ENCODE measurements at regions of chr2 and their contacts with region 1.

Region 1: GRCh38 chr2:231052494-231053451 is 3.9 kb upstream of the PSMD1 start:
- DNase-seq: peak; percentile 68
- H3K4me3 ChIP-seq: peak overlapping the region; percentile 39 to 43
- H3K27ac ChIP-seq: peak overlapping the region in 1 of 2 donors; percentile 27
- H3K4me1 ChIP-seq: peaks cover 4% of the 10 kb centered on the region
- H3K27me3 ChIP-seq: no peaks in the 10 kb centered on the region
- CTCF ChIP-seq: peak; percentile 50 to 87 (median 79)
- POLR2A ChIP-seq: no peak

Region 2: DNA sequence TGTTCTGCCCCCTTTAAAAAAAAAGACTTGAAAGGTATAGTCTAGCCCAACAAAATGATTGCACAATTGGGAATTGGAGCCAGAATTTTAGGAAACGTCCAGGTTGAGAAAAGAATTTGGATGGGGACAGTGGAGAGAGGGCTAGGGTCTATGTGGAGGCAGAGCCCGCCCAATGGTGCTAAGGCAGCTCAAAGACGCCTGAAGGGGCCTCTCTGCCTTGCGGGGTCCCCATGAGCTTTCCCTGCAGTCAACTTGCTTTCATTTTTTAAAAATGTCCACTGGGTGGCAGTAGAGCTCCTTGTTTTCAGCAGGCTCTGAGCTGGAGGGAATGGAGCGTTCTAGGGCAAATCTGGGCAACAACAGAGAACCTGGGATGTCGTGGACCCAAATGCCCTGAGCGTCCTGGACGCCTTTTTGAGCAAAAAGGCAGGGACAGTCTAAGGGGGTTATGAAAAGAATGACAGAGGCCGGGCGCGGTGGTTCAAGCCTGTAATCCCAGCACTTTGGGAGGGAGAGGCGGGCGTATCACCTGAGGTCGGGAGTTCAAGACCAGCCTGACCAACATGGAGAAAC is 228.3 kb before region 1 on chr2:
- intact Hi-C with region 1: loop called (anchors 2 kb)
- DNase-seq: peak; percentile 69
- H3K4me3 ChIP-seq: peak overlapping the region in 1 of 2 donors; percentile 14
- H3K27ac ChIP-seq: no peak overlapping the region
- H3K4me1 ChIP-seq: peaks cover 4% of the 10 kb centered on the region
- H3K27me3 ChIP-seq: no peaks in the 10 kb centered on the region
- CTCF ChIP-seq: peak in 3 of 4 experiments; percentile 68 to 78 (median 68)
- POLR2A ChIP-seq: no peak

Region 3: DNA sequence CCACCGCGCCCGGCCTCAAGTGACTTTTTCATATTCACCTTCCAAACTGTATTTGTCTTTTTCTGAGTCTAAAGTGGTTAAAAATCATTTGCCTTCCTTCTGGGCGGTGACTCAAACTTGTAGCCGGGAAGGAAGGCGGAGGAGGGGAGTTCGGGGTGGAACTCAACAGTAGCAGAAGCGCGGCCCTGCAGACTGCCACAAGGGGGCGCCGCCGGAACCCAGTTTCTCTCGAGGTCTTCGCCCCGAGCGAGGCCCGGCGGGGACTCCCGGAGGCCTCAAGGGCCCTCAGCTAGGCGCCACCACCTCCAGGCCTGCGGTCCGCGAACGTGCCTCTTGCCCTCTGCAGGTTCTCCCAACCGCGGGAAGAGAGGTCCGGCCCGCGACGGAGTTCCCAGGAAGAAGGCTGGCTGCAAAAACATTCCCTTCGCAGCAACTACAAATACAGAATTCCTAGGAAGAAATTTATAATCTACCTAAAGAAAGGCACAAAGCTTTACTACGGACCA is 204.8 kb before region 1 on chr2:
- intact Hi-C with region 1: no loop called
- DNase-seq: peak; percentile 71
- H3K4me3 ChIP-seq: no peak overlapping the region
- H3K27ac ChIP-seq: no peak overlapping the region
- H3K4me1 ChIP-seq: no peaks in the 10 kb centered on the region
- H3K27me3 ChIP-seq: no peaks in the 10 kb centered on the region
- CTCF ChIP-seq: peak; percentile 39 to 78 (median 72)
- POLR2A ChIP-seq: no peak

Region 4: GRCh38 chr2:231094736-231095346 is 42.1 kb after region 1 on chr2:
- intact Hi-C with region 1: no loop called
- DNase-seq: no peak
- H3K4me3 ChIP-seq: no peak overlapping the region
- H3K27ac ChIP-seq: no peak overlapping the region
- H3K4me1 ChIP-seq: no peaks in the 10 kb centered on the region
- H3K27me3 ChIP-seq: no peaks in the 10 kb centered on the region
- CTCF ChIP-seq: no peak
- POLR2A ChIP-seq: no peak

Measured in prostate gland (tissue), 2 donors.